HEK293 (cell line): ENCODE measurements at regions of chr10 and their contacts with region 1.

Region 1: GRCh38 chr10:122648599-122649428 is 50.8 kb downstream of the C10orf120 start:
- H3K4me3 ChIP-seq: no peak overlapping the region
- H3K27ac ChIP-seq: no peak overlapping the region
- H3K4me1 ChIP-seq: no peaks in the 10 kb centered on the region
- CTCF ChIP-seq: peak; percentile 44

Region 2: DNA sequence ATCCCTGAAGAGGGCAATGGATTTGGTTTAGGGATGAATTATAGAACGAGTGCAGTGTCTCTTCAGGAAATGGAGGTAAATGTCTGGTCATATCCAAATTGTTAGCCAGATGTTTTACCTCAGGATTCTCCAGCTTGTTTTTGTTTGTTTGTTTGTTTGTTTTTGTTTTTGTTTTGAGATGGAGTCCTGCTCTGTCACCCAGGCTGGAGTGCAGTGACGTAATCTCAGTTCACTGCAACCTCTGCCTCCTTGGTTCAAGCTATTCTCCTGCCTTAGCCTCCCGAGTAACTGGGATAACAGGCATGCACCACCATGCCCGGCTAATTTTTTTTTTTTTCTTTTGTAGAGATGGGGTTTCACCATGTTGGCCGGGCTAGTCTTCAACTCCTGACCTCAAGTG is 43.9 kb after region 1 on chr10:
- CTCF ChIA-PET with region 1: interaction called, 14 read pairs
- POLR2A ChIA-PET with region 1: no interaction called
- H3K4me3 ChIP-seq: no peak overlapping the region
- H3K27ac ChIP-seq: no peak overlapping the region
- H3K4me1 ChIP-seq: no peaks in the 10 kb centered on the region
- CTCF ChIP-seq: no peak

Region 3: GRCh38 chr10:122703439-122704118 is 54.8 kb after region 1 on chr10:
- CTCF ChIA-PET with region 1: interaction called, 17 read pairs
- POLR2A ChIA-PET with region 1: interaction called, 3 read pairs
- H3K4me3 ChIP-seq: no peak overlapping the region
- H3K27ac ChIP-seq: no peak overlapping the region
- H3K4me1 ChIP-seq: no peaks in the 10 kb centered on the region
- CTCF ChIP-seq: peak; percentile 82